HEK293T (cell line): ENCODE measurements at regions of chr2 and their contacts with region 1.

Region 1: GRCh38 chr2:64457524-64457923 is 3.6 kb downstream of the LGALSL start:
- DNase-seq: no peak

Region 2: GRCh38 chr2:64653349-64654062 is 196.0 kb after region 1 on chr2 and contains the start of gene SERTAD2:
- CTCF ChIA-PET with region 1: no interaction called
- POLR2A ChIA-PET with region 1: no interaction called
- DNase-seq: peak; percentile 87

Region 3: DNA sequence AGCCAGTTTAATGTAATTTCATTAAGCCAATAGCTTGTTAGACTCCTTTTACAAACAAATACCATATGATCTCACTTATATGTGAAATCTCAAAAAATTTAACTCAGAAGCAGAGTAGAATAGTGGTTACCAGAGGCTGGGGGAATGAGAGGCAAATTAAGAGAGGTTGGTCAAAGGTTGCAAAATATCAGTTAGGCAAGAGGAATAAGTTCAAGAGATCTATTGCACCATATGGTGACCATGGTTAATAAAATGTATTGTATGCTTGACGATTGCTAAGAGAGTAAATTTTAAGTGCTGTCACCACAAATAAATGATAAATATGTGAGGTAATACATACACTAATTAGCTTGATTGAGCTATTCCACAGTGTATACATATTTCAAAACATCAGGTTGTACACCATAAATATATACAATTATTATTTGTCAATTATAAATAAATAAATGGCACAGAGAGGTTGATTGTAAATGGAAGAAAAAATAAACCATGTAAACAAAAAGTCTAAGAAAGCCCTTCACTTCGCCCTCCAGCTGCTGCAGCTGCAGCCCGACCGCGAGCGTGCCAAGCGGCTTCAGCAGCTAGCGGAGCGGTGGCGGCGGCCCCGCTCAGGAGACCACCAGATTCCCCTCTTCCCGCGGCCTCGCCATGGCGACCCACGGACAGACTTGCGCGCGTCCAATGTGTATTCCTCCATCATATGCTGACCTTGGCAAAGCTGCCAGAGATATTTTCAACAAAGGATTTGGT is 747.1 kb after region 1 on chr2:
- CTCF ChIA-PET with region 1: interaction called, 12 read pairs
- POLR2A ChIA-PET with region 1: no interaction called
- DNase-seq: no peak